Activated CD4-positive, alpha-beta T cell treated with anti-CD3 and anti-CD28 coated beads for 36 hours (primary cell): ENCODE measurements at regions of chr10 and their contacts with region 1.

Region 1: GRCh38 chr10:69092959-69093850 is 5.3 kb downstream of the SRGN start:
- DNase-seq: peak; percentile 90
- ATAC-seq: peak; percentile 22
- H3K4me3 Mint-ChIP-seq: peak overlapping the region; percentile 30
- H3K27ac Mint-ChIP-seq: peak overlapping the region; percentile 81
- H3K4me1 Mint-ChIP-seq: peaks cover 60% of the 10 kb centered on the region
- H3K27me3 Mint-ChIP-seq: no peaks in the 10 kb centered on the region

Region 2: DNA sequence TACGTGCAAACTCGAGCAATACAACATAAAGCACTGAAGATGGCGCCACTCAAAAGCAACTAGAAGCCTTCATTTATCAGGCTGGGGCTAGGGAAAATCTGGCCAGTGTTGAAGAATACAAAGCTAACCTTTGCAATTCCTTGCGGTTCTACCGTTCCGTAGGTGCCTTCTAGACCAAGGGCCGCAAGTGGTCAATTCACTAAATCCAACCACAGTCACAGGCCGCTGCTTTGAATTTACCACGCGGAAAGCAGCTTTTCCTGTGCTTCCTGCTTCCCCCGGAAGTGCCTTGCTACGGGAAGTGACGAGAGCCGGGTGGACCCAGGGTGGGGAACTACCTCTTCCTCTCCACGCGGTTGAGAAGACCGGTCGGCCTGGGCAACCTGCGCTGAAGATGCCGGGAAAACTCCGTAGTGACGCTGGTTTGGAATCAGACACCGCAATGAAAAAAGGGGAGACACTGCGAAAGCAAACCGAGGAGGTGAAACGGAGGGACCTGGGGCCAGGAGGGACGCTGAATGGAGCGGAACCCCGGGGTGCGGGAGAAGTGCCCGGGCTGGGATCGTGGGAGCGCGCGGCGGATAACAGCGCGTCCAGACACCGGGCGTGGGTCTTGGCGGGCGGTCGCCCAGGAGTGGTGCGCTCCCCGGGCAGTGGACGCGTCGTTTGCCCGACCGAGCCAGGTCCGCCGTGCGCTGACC is 137.2 kb before region 1 on chr10 and contains the start of gene DDX21:
- CTCF ChIA-PET with region 1: interaction called, 4 read pairs
- POLR2A ChIA-PET with region 1: interaction called, 12 read pairs
- intact Hi-C with region 1: loop called (anchors 1 kb)
- DNase-seq: peak; percentile 94
- ATAC-seq: peak; percentile 85
- H3K4me3 Mint-ChIP-seq: peak within 1 kb of the TSS; percentile 98
- H3K27ac Mint-ChIP-seq: peak within 1 kb of the TSS; percentile 100
- H3K4me1 Mint-ChIP-seq: peaks cover 35% of the 10 kb centered on the region
- H3K27me3 Mint-ChIP-seq: no peaks in the 10 kb centered on the region
- total RNA-seq, gene DDX21: 187 to 192 TPM

Region 3: GRCh38 chr10:68988530-68989316 is 104.5 kb before region 1 on chr10 and contains the start of gene KIFBP:
- CTCF ChIA-PET with region 1: interaction called, 15 read pairs
- POLR2A ChIA-PET with region 1: interaction called, 5 read pairs
- intact Hi-C with region 1: no loop called
- DNase-seq: peak; percentile 91
- ATAC-seq: peak; percentile 89
- H3K4me3 Mint-ChIP-seq: peak within 1 kb of the TSS; percentile 86
- H3K27ac Mint-ChIP-seq: peak within 1 kb of the TSS; percentile 86
- H3K4me1 Mint-ChIP-seq: peaks cover 51% of the 10 kb centered on the region
- H3K27me3 Mint-ChIP-seq: no peaks in the 10 kb centered on the region
- total RNA-seq, gene KIFBP: 12.9 to 15.6 TPM

Region 4: GRCh38 chr10:68997211-68997610 is 96.0 kb before region 1 on chr10:
- CTCF ChIA-PET with region 1: interaction called, 10 read pairs
- POLR2A ChIA-PET with region 1: interaction called, 7 read pairs
- intact Hi-C with region 1: loop called (anchors 2 kb)
- DNase-seq: no peak
- ATAC-seq: peak; percentile 10
- H3K4me3 Mint-ChIP-seq: peak overlapping the region; percentile 13
- H3K27ac Mint-ChIP-seq: peak overlapping the region; percentile 96
- H3K4me1 Mint-ChIP-seq: peaks cover 45% of the 10 kb centered on the region
- H3K27me3 Mint-ChIP-seq: no peaks in the 10 kb centered on the region

Region 5: GRCh38 chr10:70162892-70163201 is 1069.6 kb after region 1 on chr10:
- CTCF ChIA-PET with region 1: no interaction called
- POLR2A ChIA-PET with region 1: no interaction called
- intact Hi-C with region 1: loop called in 1 of 2 experiments (anchors 5 kb)
- DNase-seq: peak; percentile 84
- ATAC-seq: peak; percentile 87
- H3K4me3 Mint-ChIP-seq: peak overlapping the region; percentile 60
- H3K27ac Mint-ChIP-seq: peak overlapping the region; percentile 90
- H3K4me1 Mint-ChIP-seq: peaks cover 74% of the 10 kb centered on the region
- H3K27me3 Mint-ChIP-seq: no peaks in the 10 kb centered on the region